PC-9 (cell line): ENCODE measurements at regions of chr1 and their contacts with region 1.

Region 1: GRCh38 chr1:38312753-38313152 is 266.2 kb upstream of the POU3F1 start:
- DNase-seq: no peak
- H3K4me3 ChIP-seq: no peak overlapping the region
- H3K27ac ChIP-seq: no peak overlapping the region
- H3K4me1 ChIP-seq: no peaks in the 10 kb centered on the region
- H3K27me3 ChIP-seq: peaks cover 23% of the 10 kb centered on the region; the same call in 1 of the 2 replicates
- CTCF ChIP-seq: no peak

Region 2: DNA sequence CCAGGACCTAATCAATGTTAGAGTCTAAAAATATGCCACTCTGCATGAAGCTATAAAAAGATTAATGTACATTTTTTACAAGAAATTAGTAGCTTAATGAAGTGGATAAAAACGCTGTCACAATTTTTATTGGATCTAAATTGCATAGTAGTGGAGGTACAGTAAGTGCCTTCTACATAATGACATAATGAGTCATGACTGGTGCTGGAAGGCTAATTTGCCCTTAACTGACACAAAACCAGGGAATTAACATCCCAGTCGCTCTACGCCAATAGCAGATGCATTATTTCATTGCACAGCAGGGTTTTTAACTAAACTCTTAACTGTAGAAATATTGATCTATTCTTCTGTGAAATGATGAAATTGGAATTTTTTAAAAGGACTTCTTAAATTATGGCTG is 513.5 kb after region 1 on chr1:
- CTCF ChIA-PET with region 1: interaction called, 11 read pairs
- POLR2A ChIA-PET with region 1: no interaction called
- intact Hi-C with region 1: no loop called
- DNase-seq: no peak
- H3K4me3 ChIP-seq: no peak overlapping the region
- H3K27ac ChIP-seq: no peak overlapping the region
- H3K4me1 ChIP-seq: no peaks in the 10 kb centered on the region
- H3K27me3 ChIP-seq: peaks cover 94% of the 10 kb centered on the region
- CTCF ChIP-seq: no peak

Region 3: DNA sequence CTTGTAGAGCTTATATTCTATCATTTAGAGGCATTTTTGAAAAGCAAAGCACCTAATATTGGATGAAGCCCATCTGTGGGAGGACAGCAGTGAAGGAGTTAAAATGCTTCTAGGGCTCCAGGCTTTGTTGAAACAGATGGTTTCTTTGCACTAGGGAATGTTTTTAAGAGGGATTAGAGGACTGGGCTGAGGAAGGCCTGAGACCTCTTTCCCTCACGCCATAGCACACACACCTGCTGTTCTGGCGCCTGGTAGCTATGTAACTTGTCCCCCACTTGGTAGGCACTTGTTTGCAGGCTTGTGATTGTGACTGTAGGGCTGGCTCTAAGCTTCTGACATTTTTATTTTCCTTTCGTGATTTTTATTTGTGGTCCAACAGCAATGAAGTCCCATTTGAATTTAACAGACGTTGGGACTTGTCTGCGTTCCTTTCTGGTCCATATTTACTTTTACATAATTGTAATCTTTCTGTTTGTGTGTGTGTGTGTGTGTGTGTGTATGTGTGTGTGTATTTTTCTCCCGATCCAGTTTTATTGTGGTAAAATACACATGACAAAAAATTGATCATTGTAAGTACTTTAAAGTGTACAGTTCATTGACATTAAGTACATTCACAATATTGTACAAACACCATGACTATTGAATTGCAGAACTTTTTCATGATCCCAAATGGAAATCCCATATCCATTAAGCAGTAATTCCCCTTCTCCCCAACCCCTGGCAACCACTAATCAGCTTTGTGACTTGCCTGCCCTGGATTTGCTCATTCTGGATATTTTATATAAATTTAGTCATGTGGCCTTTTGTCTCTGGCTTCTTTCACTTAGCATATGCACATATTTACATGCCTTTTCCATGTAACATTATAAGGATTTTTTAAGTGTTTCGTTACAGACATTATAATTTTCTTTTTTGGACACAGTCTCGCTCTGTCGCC is 858.2 kb after region 1 on chr1:
- CTCF ChIA-PET with region 1: no interaction called
- POLR2A ChIA-PET with region 1: no interaction called
- intact Hi-C with region 1: no loop called
- DNase-seq: no peak
- H3K4me3 ChIP-seq: no peak overlapping the region
- H3K27ac ChIP-seq: no peak overlapping the region
- H3K4me1 ChIP-seq: peaks cover 14% of the 10 kb centered on the region
- H3K27me3 ChIP-seq: no peaks in the 10 kb centered on the region
- CTCF ChIP-seq: no peak